ENCODE measurements at regions of chr16 and their contacts with region 1.

Region 1: DNA sequence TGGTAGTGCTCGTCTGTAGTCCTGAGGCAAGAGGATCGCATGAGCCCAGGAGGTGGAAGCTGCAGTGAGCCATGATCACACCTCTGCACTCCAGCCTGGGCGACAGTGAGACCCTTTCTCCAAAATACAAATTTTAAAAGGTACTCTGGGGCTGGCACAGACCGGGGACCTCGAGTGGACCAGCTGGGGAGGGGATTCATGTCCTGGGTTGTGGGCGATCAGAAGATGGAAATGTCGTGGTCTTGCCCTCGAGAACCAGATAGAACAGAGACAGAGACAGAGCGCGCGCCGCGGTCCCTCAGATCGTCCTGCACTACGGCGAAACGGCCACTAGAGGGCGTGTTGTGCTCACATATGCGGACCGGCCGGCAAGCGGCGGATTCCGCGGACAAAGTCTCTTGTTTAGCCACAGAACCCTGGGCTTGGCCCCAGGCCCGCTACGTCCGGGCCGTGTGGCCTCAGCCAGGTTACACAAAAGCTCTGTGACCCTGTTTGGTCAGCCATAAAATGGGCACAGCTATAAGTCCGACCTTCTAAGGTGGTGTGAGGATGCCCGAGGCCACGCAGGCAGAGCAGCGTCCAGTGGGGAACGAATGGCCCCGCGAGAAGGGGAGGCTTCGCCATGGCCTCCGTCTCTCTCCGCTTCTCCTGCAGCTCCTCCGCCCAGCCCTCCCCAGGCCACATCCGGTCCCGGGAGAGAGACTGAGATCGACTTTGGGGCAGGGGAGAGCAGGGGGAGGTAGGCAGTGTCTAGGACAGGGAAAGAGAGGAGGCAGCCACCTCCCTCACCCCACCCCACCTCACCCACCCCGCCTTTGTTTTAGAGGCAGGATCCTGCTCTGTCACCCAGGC is 14.6 kb upstream of the SBK1 start:
- DNase-seq: peak; percentile 69 to 81
- ATAC-seq: peak; percentile 89 to 94
- H3K4me3 ChIP-seq: peak overlapping the region; percentile 46
- H3K27ac ChIP-seq: peak overlapping the region; percentile 75 to 86
- H3K4me1 ChIP-seq: no peaks in the 10 kb centered on the region; the same call in 2 of the 3 replicates
- CTCF ChIP-seq: peak; percentile 96
- EP300 ChIP-seq: no peak
- POLR2A ChIP-seq: peak; percentile 30; the same call in 1 of the 2 replicates
- RAD21 ChIP-seq: peak; percentile 97 to 98

Region 2: DNA sequence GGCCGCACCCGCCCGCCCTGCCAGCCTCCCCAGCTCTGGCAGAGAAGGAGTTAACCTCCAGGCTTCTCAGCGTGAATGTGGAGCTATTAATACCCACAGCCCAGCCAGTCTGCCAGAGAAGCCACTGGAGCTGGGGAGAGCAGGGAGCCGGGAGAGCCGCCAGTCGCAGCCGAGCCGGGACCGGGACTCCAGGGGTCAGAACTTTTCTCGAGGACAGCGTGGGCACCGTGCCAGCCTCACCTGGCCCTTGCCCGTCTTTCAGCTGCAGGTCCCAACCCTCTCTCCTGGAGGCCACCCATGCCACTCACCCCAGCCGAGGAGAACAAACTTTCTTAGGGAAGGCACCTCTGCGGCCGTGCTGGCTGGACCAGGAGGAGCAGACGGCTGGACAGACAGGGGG is 19.2 kb before region 1 on chr16:
- CTCF ChIA-PET with region 1: interaction called, 41 read pairs
- POLR2A ChIA-PET with region 1: no interaction called
- DNase-seq: no peak
- ATAC-seq: peak in 1 of 2 experiments; percentile 39; a peak in 2 of 6 replicates
- H3K4me3 ChIP-seq: no peak overlapping the region
- H3K27ac ChIP-seq: no peak overlapping the region
- H3K4me1 ChIP-seq: no peaks in the 10 kb centered on the region
- CTCF ChIP-seq: no peak
- EP300 ChIP-seq: no peak
- POLR2A ChIP-seq: no peak
- RAD21 ChIP-seq: no peak

Region 3: GRCh38 chr16:28264656-28265055 is 13.1 kb before region 1 on chr16:
- CTCF ChIA-PET with region 1: interaction called, 41 read pairs
- POLR2A ChIA-PET with region 1: interaction called, 7 read pairs
- DNase-seq: peak in 1 of 2 experiments; percentile 45
- ATAC-seq: peak; percentile 44 to 55; a peak in 4 of 6 replicates
- H3K4me3 ChIP-seq: no peak overlapping the region
- H3K27ac ChIP-seq: no peak overlapping the region
- H3K4me1 ChIP-seq: no peaks in the 10 kb centered on the region
- CTCF ChIP-seq: no peak
- EP300 ChIP-seq: no peak
- POLR2A ChIP-seq: no peak
- RAD21 ChIP-seq: no peak

Region 4: GRCh38 chr16:28291873-28292660 is 14.3 kb after region 1 on chr16 and contains the start of gene SBK1:
- CTCF ChIA-PET with region 1: interaction called, 864 read pairs
- POLR2A ChIA-PET with region 1: no interaction called
- DNase-seq: peak; percentile 65 to 92
- ATAC-seq: peak; percentile 84 to 85
- H3K4me3 ChIP-seq: peak within 1 kb of the TSS; percentile 89
- H3K27ac ChIP-seq: peak within 1 kb of the TSS; percentile 82 to 87
- H3K4me1 ChIP-seq: peaks cover 13% of the 10 kb centered on the region
- CTCF ChIP-seq: no peak
- EP300 ChIP-seq: no peak
- POLR2A ChIP-seq: no peak
- RAD21 ChIP-seq: no peak
- polyA plus RNA-seq, gene SBK1: 0.13 and 0.20 TPM in 2 replicates

Region 5: DNA sequence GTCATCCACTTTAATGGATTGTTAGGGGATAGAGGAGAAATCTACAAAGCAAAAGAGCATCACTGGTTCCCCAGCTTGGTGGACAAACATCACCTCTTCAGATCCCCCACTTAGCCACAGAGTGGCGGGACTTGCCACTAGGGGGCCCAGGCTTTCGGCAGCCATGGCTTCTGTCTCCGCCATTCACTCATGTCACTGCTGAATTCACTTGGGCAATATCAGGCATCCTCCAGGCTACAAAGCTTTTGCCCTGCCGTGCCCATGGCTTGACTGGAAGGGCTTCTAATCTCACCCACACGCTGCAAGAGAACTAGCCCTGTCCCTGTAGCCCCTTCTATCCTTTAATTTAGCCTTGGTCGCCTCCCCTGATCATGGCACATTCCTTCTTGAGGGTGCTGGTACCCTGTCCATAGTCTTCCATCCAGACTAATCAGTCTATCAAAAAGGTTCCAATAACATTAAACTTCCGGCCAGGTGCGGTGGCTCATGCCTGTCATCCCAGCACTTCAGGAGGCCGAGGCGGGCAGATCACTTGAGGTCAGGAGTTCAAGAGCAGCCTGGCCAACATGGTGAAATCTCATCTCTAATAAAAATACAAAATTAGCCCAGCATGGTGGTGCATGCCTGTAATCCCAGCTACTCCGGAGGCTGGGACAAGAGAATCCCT is 49.3 kb after region 1 on chr16:
- CTCF ChIA-PET with region 1: interaction called, 864 read pairs
- POLR2A ChIA-PET with region 1: no interaction called
- DNase-seq: peak; percentile 72 to 91
- ATAC-seq: peak; percentile 86 to 89
- H3K4me3 ChIP-seq: no peak overlapping the region
- H3K27ac ChIP-seq: no peak overlapping the region
- H3K4me1 ChIP-seq: peaks cover 10% of the 10 kb centered on the region; the same call in 2 of the 3 replicates
- CTCF ChIP-seq: peak; percentile 67
- EP300 ChIP-seq: no peak
- POLR2A ChIP-seq: no peak
- RAD21 ChIP-seq: peak; percentile 40 to 58

Region 6: GRCh38 chr16:28585674-28586073 is 307.9 kb after region 1 on chr16:
- CTCF ChIA-PET with region 1: interaction called, 10 read pairs
- POLR2A ChIA-PET with region 1: no interaction called
- DNase-seq: no peak
- ATAC-seq: no peak
- H3K4me3 ChIP-seq: no peak overlapping the region
- H3K27ac ChIP-seq: no peak overlapping the region
- H3K4me1 ChIP-seq: peaks cover 25% of the 10 kb centered on the region
- CTCF ChIP-seq: no peak
- EP300 ChIP-seq: no peak
- POLR2A ChIP-seq: no peak
- RAD21 ChIP-seq: no peak

Measured in A549 (cell line).